ENCODE measurements at regions of chr15 and their contacts with region 1.

Region 1: DNA sequence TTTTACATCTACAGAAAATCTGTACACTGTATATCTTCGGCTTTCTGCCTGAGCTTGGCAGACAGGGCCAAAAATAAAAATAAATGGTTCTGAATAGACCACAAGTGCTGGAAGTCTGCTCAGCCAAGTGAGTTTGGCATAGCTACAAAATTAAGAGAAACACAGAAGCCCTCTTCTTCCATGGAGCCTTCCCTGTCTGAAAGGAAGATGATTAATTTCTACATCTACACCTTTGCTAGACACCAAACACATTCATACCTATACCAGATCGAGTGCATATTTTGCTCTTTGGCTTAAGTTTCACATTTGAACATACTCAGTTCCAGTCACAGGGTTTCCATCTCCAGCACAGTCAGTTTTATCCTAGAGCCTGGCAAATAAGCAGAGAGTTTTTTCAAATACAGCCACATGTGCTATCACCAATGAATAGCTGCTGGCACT is 224.6 kb downstream of the GREM1 start:
- DNase-seq: no peak
- ATAC-seq: peak; percentile 29
- H3K4me3 ChIP-seq: no peak overlapping the region
- H3K27ac ChIP-seq: no peak overlapping the region
- H3K4me1 ChIP-seq: peaks cover 0 to 4% of the 10 kb centered on the region in 2 donors
- H3K27me3 ChIP-seq: no peaks in the 10 kb centered on the region

Region 2: GRCh38 chr15:32659340-32660155 is 282.9 kb before region 1 on chr15:
- intact Hi-C with region 1: loop called (anchors 5 to 10 kb)
- DNase-seq: peak; percentile 63 to 80
- ATAC-seq: peak; percentile 88
- H3K4me3 ChIP-seq: no peak overlapping the region
- H3K27ac ChIP-seq: peak overlapping the region in 1 of 2 donors; percentile 2
- H3K4me1 ChIP-seq: peaks cover 0 to 2% of the 10 kb centered on the region in 2 donors
- H3K27me3 ChIP-seq: no peaks in the 10 kb centered on the region

Region 3: GRCh38 chr15:33114374-33114717 is 171.9 kb after region 1 on chr15:
- intact Hi-C with region 1: no loop called
- DNase-seq: no peak
- ATAC-seq: no peak
- H3K4me3 ChIP-seq: no peak overlapping the region
- H3K27ac ChIP-seq: no peak overlapping the region
- H3K4me1 ChIP-seq: no peaks in the 10 kb centered on the region
- H3K27me3 ChIP-seq: no peaks in the 10 kb centered on the region

Measured in aorta (tissue), 5 donors.